MCF 10A (cell line): ENCODE measurements at regions of chr4 and their contacts with region 1.

Region 1: GRCh38 chr4:175253184-175253902 is 335.2 kb downstream of the ADAM29 start:
- DNase-seq: peak; percentile 56
- H3K4me3 Mint-ChIP-seq: no peak overlapping the region
- H3K27ac Mint-ChIP-seq: no peak overlapping the region
- H3K4me1 Mint-ChIP-seq: no peaks in the 10 kb centered on the region
- H3K27me3 Mint-ChIP-seq: no peaks in the 10 kb centered on the region
- CTCF ChIP-seq: peak; percentile 35

Region 2: GRCh38 chr4:174365018-174365587 is 888.2 kb before region 1 on chr4:
- CTCF ChIA-PET with region 1: no interaction called
- POLR2A ChIA-PET with region 1: no interaction called
- intact Hi-C with region 1: loop called (anchors 5 kb)
- DNase-seq: peak; percentile 54
- H3K4me3 Mint-ChIP-seq: no peak overlapping the region
- H3K27ac Mint-ChIP-seq: no peak overlapping the region
- H3K4me1 Mint-ChIP-seq: no peaks in the 10 kb centered on the region
- H3K27me3 Mint-ChIP-seq: no peaks in the 10 kb centered on the region
- CTCF ChIP-seq: peak; percentile 41

Region 3: DNA sequence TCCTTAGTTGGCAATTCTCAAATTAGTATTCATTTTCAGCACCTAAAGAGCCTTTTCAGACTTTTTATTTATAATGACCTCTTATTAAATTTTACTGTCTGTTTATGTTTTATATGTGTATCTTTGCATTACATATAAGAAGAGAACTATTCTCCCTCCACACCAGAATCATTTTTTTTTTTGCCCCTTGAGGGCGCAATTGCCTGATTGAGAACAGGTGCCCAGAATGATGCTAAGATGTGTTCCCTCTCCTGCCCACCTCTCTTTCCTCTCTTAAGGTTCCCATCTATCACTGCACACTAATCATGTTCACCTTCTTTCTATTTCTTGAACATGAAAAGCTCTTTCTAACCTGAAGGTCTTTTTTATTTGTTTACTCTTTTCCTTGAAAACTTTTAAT is 379.4 kb before region 1 on chr4:
- CTCF ChIA-PET with region 1: no interaction called
- POLR2A ChIA-PET with region 1: no interaction called
- intact Hi-C with region 1: loop called (anchors 1 kb)
- DNase-seq: peak; percentile 63
- H3K4me3 Mint-ChIP-seq: no peak overlapping the region
- H3K27ac Mint-ChIP-seq: no peak overlapping the region
- H3K4me1 Mint-ChIP-seq: no peaks in the 10 kb centered on the region
- H3K27me3 Mint-ChIP-seq: no peaks in the 10 kb centered on the region
- CTCF ChIP-seq: peak; percentile 37